Psoas muscle (tissue), 8 donors: ENCODE measurements at regions of chr20 and their contacts with region 1.

Region 1: DNA sequence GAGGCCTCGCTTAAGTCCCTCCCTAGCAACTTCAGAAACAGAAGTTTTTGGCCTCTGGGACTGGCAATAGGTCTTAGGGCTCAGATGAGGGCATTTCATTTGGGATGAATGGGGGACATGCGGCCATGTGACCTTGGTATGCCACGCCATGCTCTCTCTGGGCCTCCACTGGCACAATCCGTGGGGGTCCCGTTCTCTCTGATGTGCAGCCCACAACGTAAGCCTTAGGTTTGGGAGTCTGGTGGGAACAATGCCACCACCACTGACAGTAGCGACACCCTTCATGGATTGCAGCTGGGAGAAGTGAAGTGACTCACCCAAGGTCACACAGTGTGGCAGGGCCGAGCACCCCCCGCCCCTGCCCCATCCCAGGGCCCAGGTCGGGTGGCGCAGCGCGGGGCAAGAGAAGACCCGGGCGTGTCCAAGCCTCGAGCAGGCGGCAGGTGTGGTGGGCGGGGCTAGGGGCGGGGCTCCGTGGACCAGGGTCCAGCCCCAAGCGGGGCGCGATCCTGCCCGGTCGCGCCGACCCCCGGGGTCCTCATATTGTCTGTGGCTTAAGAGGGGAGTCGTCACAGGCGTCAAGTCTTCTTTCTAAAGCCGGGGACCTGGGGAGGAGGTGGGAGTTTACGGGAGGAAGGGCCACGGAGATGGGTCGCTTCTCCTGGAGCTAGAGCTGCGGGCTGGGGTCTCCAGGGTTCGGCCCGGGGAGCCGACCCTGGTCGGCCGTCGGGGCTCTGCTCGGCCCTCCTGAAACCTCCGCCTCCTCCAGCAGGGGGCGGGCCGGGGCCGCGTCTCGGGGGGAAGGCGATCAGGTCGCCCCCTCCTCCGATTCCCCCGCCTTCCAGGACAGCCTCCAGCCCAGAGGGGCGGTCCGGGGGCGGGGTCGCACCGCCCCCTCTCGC is 698 bp upstream of the CEBPB start:
- DNase-seq: peak; percentile 92 to 96
- ATAC-seq: peak; percentile 61 to 65 (median 64)
- H3K4me3 ChIP-seq: peak overlapping the region; percentile 86
- H3K27ac ChIP-seq: peak overlapping the region; percentile 97
- H3K4me1 ChIP-seq: no peaks in the 10 kb centered on the region
- H3K27me3 ChIP-seq: no peaks in the 10 kb centered on the region
- CTCF ChIP-seq: peak; percentile 71

Region 2: DNA sequence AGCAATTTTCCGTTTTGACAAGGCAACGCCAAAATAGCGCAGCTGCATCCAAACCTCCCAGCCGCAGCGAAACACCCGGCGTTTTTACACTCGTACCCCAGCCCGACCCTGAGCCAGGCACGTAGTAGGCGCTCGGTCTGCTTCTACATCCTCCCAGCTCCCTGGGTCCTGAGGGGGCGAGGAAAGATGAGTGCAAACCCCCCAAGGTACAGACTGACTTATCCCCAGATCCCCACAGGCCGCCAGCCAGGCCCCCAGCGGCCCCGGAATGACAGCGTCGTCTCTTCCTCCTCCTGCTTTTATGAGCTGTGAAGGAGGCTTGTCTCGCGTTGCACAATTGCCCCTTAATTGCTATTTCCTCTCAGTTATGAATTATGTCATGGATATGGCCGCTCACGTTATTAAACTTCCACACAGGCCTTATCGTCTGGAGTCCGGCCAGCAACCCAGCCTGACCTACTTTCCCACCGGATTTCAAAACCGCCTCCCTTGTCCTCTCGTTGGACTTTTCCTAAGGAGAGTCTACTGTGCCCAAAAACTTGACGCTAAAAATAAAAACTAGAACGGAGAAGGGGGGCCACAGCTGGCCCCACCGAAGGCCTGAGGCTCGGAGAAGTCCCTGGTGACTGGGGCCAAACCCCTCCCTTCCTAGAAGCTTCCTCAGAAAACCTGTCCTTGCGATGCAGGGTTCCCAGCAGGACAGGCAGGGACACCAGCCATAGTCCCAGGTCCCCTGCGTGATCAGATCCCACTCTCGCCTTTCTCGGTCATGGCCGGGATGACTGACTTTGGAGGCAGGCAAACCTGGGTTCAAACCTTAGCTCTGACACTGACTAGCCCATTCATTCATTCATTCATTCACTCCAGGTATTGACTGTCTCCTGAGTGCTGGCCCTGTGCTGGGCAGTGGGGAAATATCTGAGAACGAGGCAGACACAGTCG is 189.4 kb after region 1 on chr20:
- intact Hi-C with region 1: loop called in 1 of 2 experiments (anchors 5 kb)
- DNase-seq: peak; percentile 95 to 98
- ATAC-seq: peak; percentile 81 to 86 (median 82)
- H3K4me3 ChIP-seq: peak overlapping the region; percentile 59
- H3K27ac ChIP-seq: peak overlapping the region; percentile 94
- H3K4me1 ChIP-seq: peaks cover 37% of the 10 kb centered on the region
- H3K27me3 ChIP-seq: no peaks in the 10 kb centered on the region
- CTCF ChIP-seq: no peak

Region 3: DNA sequence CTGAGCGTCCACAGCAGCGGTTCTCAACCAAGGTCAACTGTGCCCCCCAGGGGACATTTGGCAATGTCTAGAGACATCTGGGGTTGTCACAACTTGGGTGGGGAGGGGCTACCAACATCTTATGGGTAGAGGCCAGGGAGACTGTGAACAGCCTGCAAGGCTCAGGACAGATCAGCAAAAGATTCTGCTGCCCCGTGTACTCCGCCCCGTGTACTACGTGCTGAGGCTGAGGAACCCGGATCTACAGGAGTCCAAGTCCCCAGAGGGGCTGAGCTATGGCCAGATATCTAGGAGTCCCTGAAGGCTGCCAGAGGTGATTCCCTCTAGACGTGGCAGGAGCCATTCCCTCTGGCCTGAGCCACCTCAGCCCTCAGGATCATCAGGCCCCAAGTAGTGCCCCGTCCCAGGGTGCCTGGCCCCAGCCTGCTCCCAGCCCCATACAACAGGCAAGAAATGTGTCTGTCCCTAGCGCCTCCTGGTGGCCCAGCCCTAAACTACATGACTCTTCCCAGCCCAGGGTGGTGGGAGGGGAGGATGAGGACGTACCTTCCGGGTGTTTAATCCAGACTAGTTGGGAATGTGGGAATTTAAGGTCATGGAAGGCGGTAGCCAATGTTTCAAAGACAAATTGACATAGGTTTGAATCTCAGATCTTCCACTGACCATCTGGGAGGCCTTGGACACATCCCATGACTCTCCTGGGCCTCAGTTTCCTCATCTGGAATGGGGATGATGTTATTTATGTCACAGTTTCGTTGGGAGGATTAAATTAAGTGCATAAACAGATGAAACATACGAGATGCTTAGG is 270.7 kb after region 1 on chr20:
- intact Hi-C with region 1: loop called (anchors 1 to 2 kb)
- DNase-seq: peak; percentile 91 to 95
- ATAC-seq: peak; percentile 89 to 94 (median 91)
- H3K4me3 ChIP-seq: no peak overlapping the region
- H3K27ac ChIP-seq: peak overlapping the region; percentile 71
- H3K4me1 ChIP-seq: peaks cover 19% of the 10 kb centered on the region
- H3K27me3 ChIP-seq: no peaks in the 10 kb centered on the region
- CTCF ChIP-seq: peak; percentile 93

Region 4: GRCh38 chr20:50575847-50576720 is 386.2 kb after region 1 on chr20:
- intact Hi-C with region 1: loop called (anchors 2 to 5 kb)
- DNase-seq: peak; percentile 70 to 83
- ATAC-seq: peak; percentile 43 to 60 (median 46)
- H3K4me3 ChIP-seq: no peak overlapping the region
- H3K27ac ChIP-seq: peak overlapping the region; percentile 92
- H3K4me1 ChIP-seq: peaks cover 58% of the 10 kb centered on the region
- H3K27me3 ChIP-seq: no peaks in the 10 kb centered on the region
- CTCF ChIP-seq: peak; percentile 75

Region 5: GRCh38 chr20:50744143-50744792 is 554.3 kb after region 1 on chr20:
- intact Hi-C with region 1: loop called in 1 of 2 experiments (anchors 10 kb)
- DNase-seq: peak; percentile 67 to 87
- ATAC-seq: peak; percentile 92 to 94 (median 93)
- H3K4me3 ChIP-seq: peak overlapping the region; percentile 26
- H3K27ac ChIP-seq: peak overlapping the region; percentile 92
- H3K4me1 ChIP-seq: peaks cover 21% of the 10 kb centered on the region
- H3K27me3 ChIP-seq: no peaks in the 10 kb centered on the region
- CTCF ChIP-seq: peak; percentile 16